ENCODE measurements at regions of chr13 and their contacts with region 1.

Region 1: GRCh38 chr13:40789275-40790133 is at the start of gene SLC25A15:
- DNase-seq: peak; percentile 77 to 84
- ATAC-seq: peak; percentile 89 to 96 (median 94)
- H3K4me3 ChIP-seq: peak within 1 kb of the TSS; percentile 42 to 85 (median 70)
- H3K27ac ChIP-seq: peak within 1 kb of the TSS; percentile 1 to 92 (median 84)
- H3K4me1 ChIP-seq: peaks cover 0 to 19% (median 10%) of the 10 kb centered on the region in 9 donors
- H3K27me3 ChIP-seq: no peaks in the 10 kb centered on the region
- CTCF ChIP-seq: peak in 5 of 9 donors; percentile 38 to 55 (median 53)
- total RNA-seq, gene SLC25A15: 3.3 to 6.0 (median 4.9) TPM

Region 2: GRCh38 chr13:40629678-40630384 is 159.7 kb before region 1 on chr13:
- intact Hi-C with region 1: no loop called
- DNase-seq: no peak
- ATAC-seq: peak in 3 of 8 donors; percentile 10 to 35 (median 19)
- H3K4me3 ChIP-seq: no peak overlapping the region
- H3K27ac ChIP-seq: peak overlapping the region in 1 of 10 donors; percentile 60
- H3K4me1 ChIP-seq: peaks cover 0 to 59% (median 34%) of the 10 kb centered on the region in 9 donors
- H3K27me3 ChIP-seq: no peaks in the 10 kb centered on the region
- CTCF ChIP-seq: no peak

Region 3: DNA sequence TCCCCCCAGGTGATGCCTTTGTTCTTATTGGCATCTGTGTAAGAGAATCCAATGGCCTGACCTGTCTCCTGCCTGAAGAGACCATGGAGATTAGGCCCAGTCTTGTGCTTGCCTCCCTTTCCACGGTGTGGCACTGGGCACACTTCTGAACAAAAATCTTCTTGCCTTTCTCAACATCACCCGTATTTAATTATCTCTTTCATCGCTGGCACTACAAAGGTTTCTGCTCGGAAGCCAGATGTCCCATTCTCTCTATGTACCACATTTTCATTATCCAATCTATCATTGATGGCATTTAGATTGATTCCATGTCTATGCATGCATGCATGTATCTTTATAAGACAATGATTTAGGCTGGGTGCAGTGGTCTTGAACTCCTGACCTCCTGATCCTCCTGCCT is 74.2 kb after region 1 on chr13:
- intact Hi-C with region 1: no loop called
- DNase-seq: no peak
- ATAC-seq: no peak
- H3K4me3 ChIP-seq: no peak overlapping the region
- H3K27ac ChIP-seq: no peak overlapping the region
- H3K4me1 ChIP-seq: no peaks in the 10 kb centered on the region
- H3K27me3 ChIP-seq: no peaks in the 10 kb centered on the region
- CTCF ChIP-seq: no peak

Region 4: GRCh38 chr13:40922437-40923040 is 133.0 kb after region 1 on chr13:
- intact Hi-C with region 1: loop called in 1 of 10 experiments (anchors 5 kb)
- DNase-seq: peak; percentile 13 to 18
- ATAC-seq: no peak
- H3K4me3 ChIP-seq: peak overlapping the region in 3 of 10 donors; percentile 65 to 77 (median 72)
- H3K27ac ChIP-seq: peak overlapping the region in 4 of 10 donors; percentile 45 to 89 (median 72)
- H3K4me1 ChIP-seq: peaks cover 0 to 17% (median 11%) of the 10 kb centered on the region in 9 donors
- H3K27me3 ChIP-seq: no peaks in the 10 kb centered on the region
- CTCF ChIP-seq: no peak

Measured in heart right ventricle (tissue), 16 donors.